ENCODE measurements at regions of chr20 and their contacts with region 1.

Region 1: DNA sequence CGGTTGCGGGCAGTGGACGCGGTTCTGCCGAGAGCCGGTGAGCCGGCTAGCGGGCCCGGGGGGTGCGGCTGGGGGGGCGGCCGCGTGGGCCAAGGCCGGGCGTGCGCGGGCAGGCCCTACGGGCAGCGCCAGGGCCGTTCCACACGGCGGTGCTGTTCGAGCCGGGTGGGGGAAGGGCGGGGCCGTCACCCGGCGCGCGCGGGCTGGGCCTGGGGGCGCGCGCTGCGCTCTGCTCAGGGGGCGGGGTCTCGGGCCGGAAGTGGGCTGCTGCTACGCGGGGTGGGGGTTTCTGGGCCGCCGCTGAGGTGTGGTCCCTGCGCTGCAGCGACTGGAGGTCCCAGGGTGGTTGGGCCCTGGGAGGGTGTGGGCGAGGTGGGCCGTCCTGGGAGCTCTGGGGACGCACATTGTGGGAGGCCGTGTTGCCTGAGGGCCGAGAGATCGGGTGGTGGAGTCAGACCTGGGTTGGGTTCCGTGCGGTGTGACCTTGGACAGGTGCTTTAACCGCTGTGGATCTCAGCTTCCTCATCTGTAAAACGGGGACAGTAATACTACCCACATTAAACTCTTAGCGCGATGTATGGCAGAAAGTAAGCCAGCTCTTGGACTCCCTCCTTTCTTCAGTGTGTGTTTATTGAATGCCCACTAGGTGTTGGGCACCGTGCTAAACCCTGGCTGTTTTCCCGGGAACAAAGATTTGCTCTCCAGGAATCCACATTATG is 397 bp downstream of the MAPRE1 start:
- DNase-seq: peak in 8 of 9 experiments; percentile 78 to 92 (median 86)
- ATAC-seq: peak; percentile 76
- H3K4me3 ChIP-seq: peak overlapping the region; percentile 71 to 72
- H3K4me3 Mint-ChIP-seq: peak overlapping the region; percentile 97
- H3K27ac ChIP-seq: peak overlapping the region; percentile 88 to 93
- H3K27ac Mint-ChIP-seq: peak overlapping the region; percentile 98
- H3K4me1 ChIP-seq: peaks cover 41% of the 10 kb centered on the region
- H3K4me1 Mint-ChIP-seq: peaks cover 42% of the 10 kb centered on the region
- H3K27me3 ChIP-seq: no peaks in the 10 kb centered on the region
- H3K27me3 Mint-ChIP-seq: no peaks in the 10 kb centered on the region
- CTCF ChIP-seq: no peak

Region 2: DNA sequence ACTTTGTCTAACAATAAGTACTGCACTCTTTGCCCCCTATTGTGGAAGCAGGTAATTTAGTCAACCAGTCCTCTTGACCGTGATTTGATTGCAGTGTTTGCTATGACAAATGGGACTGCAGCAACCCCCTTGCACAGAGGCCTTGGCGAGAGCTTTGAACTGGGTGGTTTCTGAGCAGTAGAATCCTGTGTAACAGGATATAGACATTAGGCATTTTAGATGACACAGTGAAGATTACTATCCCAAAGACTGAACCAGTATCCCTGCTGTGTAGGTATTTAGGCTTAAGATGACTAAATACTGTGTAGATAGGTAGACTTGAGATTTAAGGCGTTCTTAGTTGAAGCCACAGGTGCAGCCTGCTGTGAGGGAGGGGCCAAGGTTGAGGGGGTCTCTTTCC is 48.1 kb before region 1 on chr20:
- CTCF ChIA-PET with region 1: no interaction called
- POLR2A ChIA-PET with region 1: no interaction called
- intact Hi-C with region 1: no loop called
- DNase-seq: no peak
- ATAC-seq: peak; percentile 33
- H3K4me3 ChIP-seq: no peak overlapping the region
- H3K4me3 Mint-ChIP-seq: peak overlapping the region; percentile 8
- H3K27ac ChIP-seq: no peak overlapping the region
- H3K27ac Mint-ChIP-seq: peak overlapping the region; percentile 72
- H3K4me1 ChIP-seq: peaks cover 19% of the 10 kb centered on the region
- H3K4me1 Mint-ChIP-seq: peaks cover 40% of the 10 kb centered on the region
- H3K27me3 ChIP-seq: no peaks in the 10 kb centered on the region
- H3K27me3 Mint-ChIP-seq: no peaks in the 10 kb centered on the region
- CTCF ChIP-seq: no peak

Region 3: GRCh38 chr20:32839982-32840285 is 19.8 kb after region 1 on chr20:
- CTCF ChIA-PET with region 1: no interaction called
- POLR2A ChIA-PET with region 1: interaction called, 10 read pairs
- intact Hi-C with region 1: loop called in 1 of 2 experiments (anchors 2 kb)
- DNase-seq: no peak
- ATAC-seq: no peak
- H3K4me3 ChIP-seq: no peak overlapping the region
- H3K4me3 Mint-ChIP-seq: no peak overlapping the region
- H3K27ac ChIP-seq: no peak overlapping the region
- H3K27ac Mint-ChIP-seq: no peak overlapping the region
- H3K4me1 ChIP-seq: peaks cover 22% of the 10 kb centered on the region
- H3K4me1 Mint-ChIP-seq: peaks cover 47% of the 10 kb centered on the region
- H3K27me3 ChIP-seq: no peaks in the 10 kb centered on the region
- H3K27me3 Mint-ChIP-seq: no peaks in the 10 kb centered on the region
- CTCF ChIP-seq: no peak

Region 4: DNA sequence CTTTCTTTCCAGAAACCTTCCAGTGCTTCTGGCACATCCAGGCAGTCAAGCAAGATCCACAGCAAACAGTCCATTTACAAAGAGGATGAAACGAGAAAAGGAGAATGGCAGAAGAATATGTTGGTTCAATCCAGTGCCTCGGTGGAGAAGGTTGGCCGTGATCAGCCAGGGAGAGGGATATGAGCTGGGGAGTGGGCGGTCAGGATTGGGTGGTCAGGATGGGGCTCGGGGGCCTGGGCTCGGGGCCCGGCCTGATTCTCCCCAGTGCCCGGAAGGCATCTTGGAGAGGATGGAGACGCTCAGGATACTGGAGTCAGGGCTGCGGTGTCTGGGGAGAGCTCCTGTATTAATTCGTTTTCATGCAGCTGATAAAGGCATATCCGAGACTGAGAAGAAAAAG is 99.9 kb after region 1 on chr20:
- CTCF ChIA-PET with region 1: no interaction called
- POLR2A ChIA-PET with region 1: no interaction called
- intact Hi-C with region 1: no loop called
- DNase-seq: no peak
- ATAC-seq: no peak
- H3K4me3 ChIP-seq: no peak overlapping the region
- H3K4me3 Mint-ChIP-seq: no peak overlapping the region
- H3K27ac ChIP-seq: no peak overlapping the region
- H3K27ac Mint-ChIP-seq: no peak overlapping the region
- H3K4me1 ChIP-seq: no peaks in the 10 kb centered on the region
- H3K4me1 Mint-ChIP-seq: no peaks in the 10 kb centered on the region
- H3K27me3 ChIP-seq: no peaks in the 10 kb centered on the region
- H3K27me3 Mint-ChIP-seq: no peaks in the 10 kb centered on the region
- CTCF ChIP-seq: no peak

Region 5: DNA sequence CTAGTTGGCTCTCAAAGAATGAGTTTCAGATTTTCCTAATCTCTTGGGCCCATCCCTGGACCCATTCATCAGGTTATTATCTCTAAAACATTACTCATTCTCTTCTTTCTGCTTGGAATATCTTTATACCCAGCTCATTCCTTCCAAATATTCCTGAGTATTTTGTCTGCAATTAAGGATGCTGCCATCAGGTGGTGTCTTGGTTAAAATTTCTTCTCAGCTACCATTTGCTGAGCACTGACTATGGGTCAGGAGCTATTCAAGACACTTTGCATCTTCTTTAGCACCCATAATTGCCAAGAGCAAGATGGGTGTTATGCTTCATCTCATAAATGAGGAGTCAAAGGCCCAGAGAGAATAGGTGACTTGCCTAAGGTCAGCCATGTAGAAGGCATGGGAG is 175.7 kb after region 1 on chr20:
- CTCF ChIA-PET with region 1: no interaction called
- POLR2A ChIA-PET with region 1: no interaction called
- intact Hi-C with region 1: no loop called
- DNase-seq: no peak
- ATAC-seq: no peak
- H3K4me3 ChIP-seq: no peak overlapping the region
- H3K4me3 Mint-ChIP-seq: no peak overlapping the region
- H3K27ac ChIP-seq: no peak overlapping the region
- H3K27ac Mint-ChIP-seq: no peak overlapping the region
- H3K4me1 ChIP-seq: peaks cover 35% of the 10 kb centered on the region
- H3K4me1 Mint-ChIP-seq: peaks cover 56% of the 10 kb centered on the region
- H3K27me3 ChIP-seq: no peaks in the 10 kb centered on the region
- H3K27me3 Mint-ChIP-seq: no peaks in the 10 kb centered on the region
- CTCF ChIP-seq: no peak